ENCODE measurements at regions of chr17 and their contacts with region 1.

Region 1: DNA sequence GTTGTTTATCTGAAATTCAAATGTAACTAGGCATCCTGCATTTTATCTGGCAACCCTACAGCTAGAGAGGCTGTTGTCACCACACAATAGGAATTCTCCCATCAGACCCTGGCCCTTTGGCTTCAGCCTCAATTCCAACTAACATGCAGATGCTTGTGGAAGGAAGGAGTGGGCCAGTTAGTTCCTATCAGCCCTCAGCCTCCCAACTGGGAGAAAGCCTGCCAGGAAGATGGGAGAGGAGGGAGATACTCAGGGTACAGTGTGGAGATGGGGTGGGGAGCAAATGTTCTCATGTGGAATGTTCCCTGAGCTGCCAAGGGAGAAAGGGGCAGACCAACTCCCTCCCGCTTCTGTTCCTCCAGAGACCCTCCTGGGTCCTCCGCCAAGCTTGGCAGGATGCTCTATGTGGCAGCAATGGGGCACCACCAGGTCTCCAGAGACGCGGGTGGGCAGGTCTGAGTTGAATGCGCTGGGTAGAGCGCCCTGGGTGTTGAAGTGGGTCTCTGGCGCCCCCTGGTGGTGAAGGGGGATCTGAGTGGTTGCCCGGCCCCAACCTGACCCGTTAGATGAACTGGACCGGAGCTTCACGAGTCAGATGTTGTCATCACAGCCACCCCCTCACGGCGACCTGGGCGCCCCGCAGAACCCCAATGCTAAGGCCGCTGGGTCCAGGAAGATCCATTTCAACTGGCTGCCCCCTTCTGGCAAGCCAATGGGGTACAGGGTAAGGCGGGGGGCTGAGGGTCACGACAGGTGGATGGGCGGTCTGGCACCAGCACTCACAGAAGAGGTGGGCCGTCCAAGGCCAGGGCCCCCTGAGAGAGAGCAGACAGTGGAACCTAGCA is 15.2 kb downstream of the GALK1 start:
- H3K4me3 ChIP-seq: no peak overlapping the region; the same call in 1 of the 2 replicates
- H3K27ac ChIP-seq: no peak overlapping the region
- H3K4me1 ChIP-seq: no peaks in the 10 kb centered on the region
- CTCF ChIP-seq: peak; percentile 97

Region 2: GRCh38 chr17:75614006-75614405 is 135.8 kb before region 1 on chr17:
- CTCF ChIA-PET with region 1: interaction called, 38 read pairs
- POLR2A ChIA-PET with region 1: no interaction called
- H3K4me3 ChIP-seq: no peak overlapping the region
- H3K27ac ChIP-seq: no peak overlapping the region
- H3K4me1 ChIP-seq: no peaks in the 10 kb centered on the region
- CTCF ChIP-seq: no peak

Region 3: GRCh38 chr17:75632863-75633485 is 116.8 kb before region 1 on chr17 and contains the start of gene SMIM5:
- CTCF ChIA-PET with region 1: interaction called, 341 read pairs
- POLR2A ChIA-PET with region 1: interaction called, 4 read pairs
- H3K4me3 ChIP-seq: no peak within 1 kb of the TSS
- H3K27ac ChIP-seq: no peak within 1 kb of the TSS
- H3K4me1 ChIP-seq: peaks cover 11% of the 10 kb centered on the region
- CTCF ChIP-seq: peak; percentile 83

Region 4: DNA sequence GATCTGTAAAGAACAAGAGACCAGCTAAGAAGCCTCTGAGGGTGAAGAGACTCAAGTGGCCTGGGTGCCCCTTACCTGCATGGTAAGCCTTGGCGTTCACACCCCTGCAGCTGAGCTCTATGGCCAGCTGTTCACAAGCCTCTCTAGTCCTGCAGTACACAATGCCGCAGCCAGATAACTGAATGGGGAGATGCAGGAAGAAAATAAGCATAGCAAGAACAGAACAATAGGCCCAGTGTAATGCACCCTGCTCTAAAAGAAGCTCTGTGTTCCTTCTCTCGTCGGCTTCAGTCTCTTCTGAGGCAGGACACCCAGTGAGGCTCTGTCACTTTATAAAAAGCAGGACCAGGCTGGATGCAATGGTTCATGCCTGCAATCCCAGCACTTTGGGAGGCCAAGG is 88.2 kb before region 1 on chr17:
- CTCF ChIA-PET with region 1: interaction called, 48 read pairs
- POLR2A ChIA-PET with region 1: interaction called, 11 read pairs
- H3K4me3 ChIP-seq: no peak overlapping the region
- H3K27ac ChIP-seq: no peak overlapping the region
- H3K4me1 ChIP-seq: peaks cover 2% of the 10 kb centered on the region; the same call in 1 of the 2 replicates
- CTCF ChIP-seq: no peak

Region 5: DNA sequence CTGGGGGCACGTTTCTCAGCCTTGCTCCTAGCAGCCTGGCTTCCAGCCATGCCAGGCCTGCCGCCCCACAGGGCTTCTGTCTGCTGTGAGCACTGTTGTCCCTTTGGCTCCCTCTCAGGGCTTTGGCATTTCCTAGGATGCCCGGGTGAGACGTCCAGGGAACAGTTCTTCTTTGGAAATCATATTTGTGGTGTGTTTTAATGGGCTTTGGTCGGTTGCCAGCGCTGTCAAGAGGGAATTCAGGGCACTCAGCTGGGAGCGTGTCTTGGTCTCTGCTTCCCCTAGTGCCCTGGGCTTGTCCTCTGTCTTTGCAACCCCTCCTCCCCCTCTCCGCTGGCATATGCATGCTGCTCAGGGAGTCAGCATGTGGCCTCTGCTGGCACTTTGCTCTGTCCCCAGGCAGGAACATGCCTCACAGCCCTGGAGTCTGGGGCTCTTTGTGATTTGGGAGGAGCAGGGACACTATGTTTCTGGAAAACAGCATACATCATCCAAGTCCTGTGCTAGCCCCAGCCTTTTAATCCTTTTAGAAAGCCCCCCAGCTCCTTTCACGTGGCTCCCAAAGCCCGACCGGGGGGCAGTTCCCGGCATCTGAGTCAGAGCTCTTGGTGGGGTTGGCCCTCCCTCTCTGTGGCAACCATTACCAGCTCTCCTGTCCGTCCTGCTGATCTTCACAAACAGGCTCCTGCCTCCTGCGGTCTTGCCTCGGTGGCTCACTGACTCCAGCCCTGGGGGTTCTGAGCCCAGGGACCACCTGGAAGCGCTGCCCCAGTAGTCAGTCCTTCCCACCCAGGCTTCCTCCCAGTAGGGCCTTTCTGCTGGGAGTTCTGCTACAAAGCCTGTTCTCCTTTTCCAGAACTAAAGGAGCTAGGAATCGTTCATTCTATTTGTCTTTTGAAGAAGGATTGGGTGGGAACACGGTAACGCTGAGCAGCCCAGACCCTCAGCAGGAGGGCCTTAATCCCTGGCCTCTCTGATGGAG is 56.0 kb before region 1 on chr17:
- CTCF ChIA-PET with region 1: interaction called, 48 read pairs
- POLR2A ChIA-PET with region 1: no interaction called
- H3K4me3 ChIP-seq: no peak overlapping the region
- H3K27ac ChIP-seq: no peak overlapping the region
- H3K4me1 ChIP-seq: no peaks in the 10 kb centered on the region; the same call in 1 of the 2 replicates
- CTCF ChIP-seq: no peak

Region 6: GRCh38 chr17:75731086-75731715 is 18.6 kb before region 1 on chr17:
- CTCF ChIA-PET with region 1: interaction called, 106 read pairs
- POLR2A ChIA-PET with region 1: no interaction called
- H3K4me3 ChIP-seq: no peak overlapping the region
- H3K27ac ChIP-seq: no peak overlapping the region
- H3K4me1 ChIP-seq: no peaks in the 10 kb centered on the region
- CTCF ChIP-seq: no peak

Region 7: GRCh38 chr17:75779231-75779986 is 29.6 kb after region 1 on chr17:
- CTCF ChIA-PET with region 1: interaction called, 38 read pairs
- POLR2A ChIA-PET with region 1: interaction called, 7 read pairs
- H3K4me3 ChIP-seq: peak overlapping the region; percentile 72
- H3K27ac ChIP-seq: peak overlapping the region; percentile 94
- H3K4me1 ChIP-seq: peaks cover 17% of the 10 kb centered on the region; the same call in 1 of the 2 replicates
- CTCF ChIP-seq: no peak